ENCODE measurements at regions of chr17 and their contacts with region 1.

Region 1: DNA sequence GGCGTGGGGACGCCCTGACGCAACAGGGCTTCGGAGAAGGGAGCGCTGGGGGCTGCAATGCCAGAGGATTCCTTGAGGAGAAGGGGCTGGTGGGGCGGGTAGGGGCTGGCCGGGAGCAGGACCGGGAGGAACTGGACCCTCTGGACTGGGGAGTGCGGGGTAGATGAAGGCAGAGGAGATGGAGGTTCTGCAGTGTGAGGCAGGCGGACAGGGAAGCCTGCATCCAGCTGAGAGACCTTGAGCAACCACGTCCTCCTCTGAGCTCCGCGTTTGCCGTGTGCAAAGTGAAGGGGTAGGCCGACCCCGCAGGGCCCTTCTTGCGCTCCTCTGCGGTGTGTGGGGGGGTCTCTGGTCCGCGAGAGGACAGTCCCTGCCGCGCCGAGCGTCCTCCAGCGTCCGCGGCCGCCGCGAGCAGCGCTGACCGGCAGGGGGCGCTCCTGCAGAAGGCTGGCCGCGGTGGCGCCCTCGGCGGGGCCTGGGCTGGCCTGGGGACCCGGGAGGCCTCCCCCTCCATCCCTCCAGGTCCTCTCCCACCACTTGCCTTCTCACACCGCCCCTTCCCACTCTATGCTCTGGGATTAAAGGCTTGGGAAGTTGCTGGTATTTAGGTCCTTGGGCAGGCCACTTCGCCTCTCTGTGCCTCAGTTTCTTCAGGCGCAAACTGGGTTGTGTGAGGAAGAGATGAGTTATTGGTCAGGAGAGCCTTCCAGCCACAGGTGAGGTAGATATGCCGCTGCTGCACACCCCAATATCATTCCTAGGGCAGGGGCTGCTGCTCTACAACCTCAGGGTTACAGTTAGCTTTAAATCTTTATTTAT is 9.6 kb upstream of the WNT9B start:
- DNase-seq: peak; percentile 96
- H3K4me3 ChIP-seq: peak overlapping the region; percentile 39 to 47
- H3K27ac ChIP-seq: no peak overlapping the region
- H3K4me1 ChIP-seq: peaks cover 0 to 3% of the 10 kb centered on the region in 2 experiments; a peak in 1 of 4 replicates
- H3K27me3 ChIP-seq: peaks cover 23% of the 10 kb centered on the region; the same call in 1 of the 2 replicates
- CTCF ChIP-seq: peak; percentile 79
- EP300 ChIP-seq: no peak
- RAD21 ChIP-seq: peak; percentile 72

Region 2: DNA sequence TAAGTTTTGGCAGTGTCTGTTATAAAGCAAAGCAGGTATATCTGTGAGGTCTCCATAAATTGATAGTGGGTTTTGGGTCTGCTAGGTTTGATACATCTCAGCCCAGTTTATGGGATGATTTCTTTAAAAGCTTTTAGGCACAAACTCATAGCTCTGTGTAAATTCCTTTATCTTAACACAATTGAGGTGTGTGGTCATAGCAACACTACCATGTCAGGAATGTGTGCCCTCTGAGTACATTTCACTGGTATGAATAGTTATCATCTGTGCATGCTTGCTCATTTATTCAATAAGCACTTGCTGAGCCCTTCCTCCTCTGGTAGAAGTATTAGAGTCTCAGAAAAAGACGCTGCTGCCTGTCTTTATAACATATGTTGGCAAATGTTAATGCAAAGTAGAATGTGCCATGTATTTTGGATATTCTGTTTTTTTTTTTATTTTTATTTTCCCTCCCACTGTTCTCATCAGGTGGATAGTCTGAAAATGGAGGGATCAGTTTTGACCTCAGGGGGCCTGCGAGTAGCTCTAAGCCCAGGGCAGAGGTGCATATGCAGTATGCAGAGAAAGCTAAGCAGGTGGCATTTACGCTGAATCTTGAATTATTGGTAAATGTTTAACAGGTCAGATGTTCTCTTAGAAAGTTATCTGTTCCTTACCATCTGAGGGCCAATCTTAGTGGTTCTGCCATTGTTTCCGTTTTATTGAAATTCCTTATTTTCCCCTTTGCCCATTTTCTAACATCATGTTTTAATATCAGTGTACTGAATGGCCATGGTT is 114.0 kb before region 1 on chr17:
- CTCF ChIA-PET with region 1: no interaction called
- POLR2A ChIA-PET with region 1: no interaction called
- DNase-seq: no peak
- H3K4me3 ChIP-seq: no peak overlapping the region
- H3K27ac ChIP-seq: peak overlapping the region; percentile 51 to 64; a peak in 3 of 4 replicates
- H3K4me1 ChIP-seq: peaks cover 10 to 33% of the 10 kb centered on the region in 2 experiments; a peak in 3 of 4 replicates
- H3K27me3 ChIP-seq: no peaks in the 10 kb centered on the region
- CTCF ChIP-seq: no peak
- EP300 ChIP-seq: peak in 1 of 2 experiments; percentile 66; a peak in 1 of 4 replicates
- RAD21 ChIP-seq: no peak

Region 3: GRCh38 chr17:46782250-46782953 is 59.4 kb before region 1 on chr17:
- CTCF ChIA-PET with region 1: interaction called, 12 read pairs
- POLR2A ChIA-PET with region 1: no interaction called
- DNase-seq: peak; percentile 82
- H3K4me3 ChIP-seq: no peak overlapping the region
- H3K27ac ChIP-seq: no peak overlapping the region
- H3K4me1 ChIP-seq: peaks cover 0 to 5% of the 10 kb centered on the region in 2 experiments; a peak in 1 of 4 replicates
- H3K27me3 ChIP-seq: no peaks in the 10 kb centered on the region
- CTCF ChIP-seq: peak; percentile 91
- EP300 ChIP-seq: no peak
- RAD21 ChIP-seq: peak; percentile 80

Region 4: DNA sequence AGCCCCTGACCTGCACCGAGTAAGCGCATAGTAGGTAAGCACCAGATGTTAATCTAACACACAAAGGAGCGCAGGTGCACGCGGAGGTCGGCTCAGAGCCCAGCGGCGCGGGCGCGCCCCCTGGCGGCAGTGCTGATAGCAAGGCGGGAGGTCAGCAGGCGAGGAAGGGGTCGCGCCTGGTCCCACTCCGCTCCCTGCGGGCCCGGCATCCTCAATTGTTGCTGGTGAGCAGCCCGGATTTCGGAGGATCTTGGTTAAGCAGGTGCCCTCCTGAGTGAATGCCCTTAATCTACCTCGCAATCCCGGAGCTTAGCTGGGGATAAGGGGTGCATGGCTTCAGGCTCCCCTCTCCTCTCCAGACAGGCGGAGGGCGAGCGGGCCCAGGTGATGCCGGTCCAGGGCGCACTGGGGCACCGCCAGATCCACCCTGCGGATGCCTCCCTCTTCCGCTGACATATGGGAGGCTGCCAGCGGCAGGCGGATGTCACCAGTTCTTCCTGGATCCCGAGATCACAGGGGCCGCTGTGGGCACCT is 19.3 kb before region 1 on chr17:
- CTCF ChIA-PET with region 1: interaction called, 51 read pairs
- POLR2A ChIA-PET with region 1: no interaction called
- DNase-seq: no peak
- H3K4me3 ChIP-seq: no peak overlapping the region
- H3K27ac ChIP-seq: no peak overlapping the region
- H3K4me1 ChIP-seq: no peaks in the 10 kb centered on the region
- H3K27me3 ChIP-seq: peaks cover 9% of the 10 kb centered on the region
- CTCF ChIP-seq: peak; percentile 36; the same call in 1 of the 2 replicates
- EP300 ChIP-seq: no peak
- RAD21 ChIP-seq: no peak

Region 5: DNA sequence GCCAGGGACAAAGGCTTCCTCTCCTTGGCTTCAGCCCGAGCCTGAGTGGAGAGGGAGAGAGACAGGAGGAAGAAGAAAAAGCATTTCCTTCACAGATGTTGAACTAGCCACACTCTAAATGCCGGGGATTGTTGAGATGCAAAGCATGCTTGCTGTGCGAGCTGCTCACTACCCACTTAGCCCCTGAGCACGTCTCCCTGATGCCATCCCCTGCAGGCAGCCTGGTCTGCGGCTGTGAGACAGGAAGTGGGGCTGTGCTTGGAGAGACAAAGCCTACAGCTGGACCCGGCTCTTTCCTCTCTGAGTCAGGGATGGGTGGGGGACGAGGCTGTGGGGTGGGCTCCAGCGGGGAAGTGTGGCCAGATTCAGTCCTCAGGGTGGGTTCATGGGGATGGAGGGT is 23.3 kb after region 1 on chr17:
- CTCF ChIA-PET with region 1: interaction called, 44 read pairs
- POLR2A ChIA-PET with region 1: no interaction called
- DNase-seq: peak; percentile 51
- H3K4me3 ChIP-seq: no peak overlapping the region
- H3K27ac ChIP-seq: no peak overlapping the region
- H3K4me1 ChIP-seq: peaks cover 0 to 5% of the 10 kb centered on the region in 2 experiments; a peak in 1 of 4 replicates
- H3K27me3 ChIP-seq: 0 out of 2 replicates have a peak, but pooled peaks cover 2% of the 10 kb centered on the region
- CTCF ChIP-seq: no peak
- EP300 ChIP-seq: no peak
- RAD21 ChIP-seq: no peak

Region 6: GRCh38 chr17:46883871-46884520 is 42.2 kb after region 1 on chr17:
- CTCF ChIA-PET with region 1: interaction called, 34 read pairs
- POLR2A ChIA-PET with region 1: no interaction called
- DNase-seq: no peak
- H3K4me3 ChIP-seq: no peak overlapping the region
- H3K27ac ChIP-seq: no peak overlapping the region
- H3K4me1 ChIP-seq: no peaks in the 10 kb centered on the region
- H3K27me3 ChIP-seq: peaks cover 40% of the 10 kb centered on the region; the same call in 1 of the 2 replicates
- CTCF ChIP-seq: no peak
- EP300 ChIP-seq: no peak
- RAD21 ChIP-seq: no peak

Region 7: DNA sequence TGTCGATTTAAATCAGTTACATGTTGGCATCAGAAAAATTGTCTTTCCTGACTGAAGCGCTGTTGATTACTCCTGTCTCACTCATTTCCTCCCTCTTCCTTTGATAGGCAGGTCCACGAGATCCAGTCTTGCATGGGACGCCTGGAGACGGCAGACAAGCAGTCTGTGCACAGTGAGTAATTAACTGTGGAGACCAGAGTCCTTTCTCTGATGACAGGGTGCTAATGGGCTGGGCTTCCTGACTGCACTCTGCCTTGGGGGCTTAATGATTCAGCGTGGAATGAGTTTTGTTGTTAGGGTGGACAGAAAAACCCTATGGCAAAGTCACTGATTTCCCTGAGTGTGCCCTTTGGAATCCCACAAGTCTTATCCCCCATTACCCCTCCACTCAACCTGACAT is 87.6 kb after region 1 on chr17:
- CTCF ChIA-PET with region 1: interaction called, 16 read pairs
- POLR2A ChIA-PET with region 1: no interaction called
- DNase-seq: no peak
- H3K4me3 ChIP-seq: no peak overlapping the region
- H3K27ac ChIP-seq: peak overlapping the region; percentile 6 to 7; a peak in 3 of 4 replicates
- H3K4me1 ChIP-seq: peaks cover 5 to 41% of the 10 kb centered on the region in 2 experiments; a peak in 2 of 4 replicates
- H3K27me3 ChIP-seq: no peaks in the 10 kb centered on the region
- CTCF ChIP-seq: no peak
- EP300 ChIP-seq: no peak
- RAD21 ChIP-seq: no peak

Region 8: GRCh38 chr17:46995841-46996571 is 154.2 kb after region 1 on chr17:
- CTCF ChIA-PET with region 1: interaction called, 16 read pairs
- POLR2A ChIA-PET with region 1: no interaction called
- DNase-seq: no peak
- H3K4me3 ChIP-seq: no peak overlapping the region
- H3K27ac ChIP-seq: no peak overlapping the region
- H3K4me1 ChIP-seq: no peaks in the 10 kb centered on the region; a peak in 1 of 4 replicates
- H3K27me3 ChIP-seq: no peaks in the 10 kb centered on the region
- CTCF ChIP-seq: no peak
- EP300 ChIP-seq: no peak
- RAD21 ChIP-seq: no peak

Measured in SK-N-SH (cell line).